A549 (cell line): ENCODE measurements at regions of chr2 and their contacts with region 1.

Region 1: DNA sequence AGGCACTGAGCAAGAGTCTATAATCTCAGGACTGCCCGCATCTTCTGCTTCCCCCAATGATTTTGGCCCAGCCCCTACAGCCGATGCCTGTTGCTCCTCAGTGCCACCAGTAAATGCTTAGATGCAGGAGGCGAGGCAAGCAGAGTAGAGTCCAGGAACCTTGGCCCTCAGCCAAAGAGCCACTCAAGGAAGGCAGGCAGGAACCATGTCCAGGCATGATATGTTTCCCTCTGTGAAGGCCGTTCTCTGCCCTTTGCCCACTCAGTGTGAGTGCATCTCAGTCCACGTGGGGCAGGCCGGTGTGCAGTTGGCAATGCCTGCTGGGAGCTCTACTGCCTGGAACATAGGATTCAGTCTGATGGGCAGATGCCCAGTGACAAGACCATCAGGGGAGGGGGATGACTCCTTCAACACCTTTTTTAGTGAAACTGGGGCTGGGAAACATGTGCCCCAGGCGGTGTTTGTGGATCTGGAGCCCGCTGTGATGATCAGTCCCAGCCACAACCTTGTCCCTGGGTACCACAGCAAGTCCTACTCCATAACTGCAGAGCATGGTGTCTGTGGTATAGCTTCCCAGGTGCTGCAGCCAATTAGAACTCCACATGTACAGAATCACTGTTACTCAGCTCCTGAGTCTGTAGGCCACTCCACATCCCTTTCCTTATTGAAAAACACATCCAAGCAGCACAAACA is 9.7 kb upstream of the DNAJB2 start:
- DNase-seq: no peak
- ATAC-seq: no peak
- H3K4me3 ChIP-seq: no peak overlapping the region
- H3K27ac ChIP-seq: peak overlapping the region; percentile 29 to 96; a peak in 5 of 6 replicates
- H3K4me1 ChIP-seq: peaks cover 46% of the 10 kb centered on the region
- CTCF ChIP-seq: no peak
- EP300 ChIP-seq: no peak
- POLR2A ChIP-seq: no peak
- RAD21 ChIP-seq: no peak

Region 2: DNA sequence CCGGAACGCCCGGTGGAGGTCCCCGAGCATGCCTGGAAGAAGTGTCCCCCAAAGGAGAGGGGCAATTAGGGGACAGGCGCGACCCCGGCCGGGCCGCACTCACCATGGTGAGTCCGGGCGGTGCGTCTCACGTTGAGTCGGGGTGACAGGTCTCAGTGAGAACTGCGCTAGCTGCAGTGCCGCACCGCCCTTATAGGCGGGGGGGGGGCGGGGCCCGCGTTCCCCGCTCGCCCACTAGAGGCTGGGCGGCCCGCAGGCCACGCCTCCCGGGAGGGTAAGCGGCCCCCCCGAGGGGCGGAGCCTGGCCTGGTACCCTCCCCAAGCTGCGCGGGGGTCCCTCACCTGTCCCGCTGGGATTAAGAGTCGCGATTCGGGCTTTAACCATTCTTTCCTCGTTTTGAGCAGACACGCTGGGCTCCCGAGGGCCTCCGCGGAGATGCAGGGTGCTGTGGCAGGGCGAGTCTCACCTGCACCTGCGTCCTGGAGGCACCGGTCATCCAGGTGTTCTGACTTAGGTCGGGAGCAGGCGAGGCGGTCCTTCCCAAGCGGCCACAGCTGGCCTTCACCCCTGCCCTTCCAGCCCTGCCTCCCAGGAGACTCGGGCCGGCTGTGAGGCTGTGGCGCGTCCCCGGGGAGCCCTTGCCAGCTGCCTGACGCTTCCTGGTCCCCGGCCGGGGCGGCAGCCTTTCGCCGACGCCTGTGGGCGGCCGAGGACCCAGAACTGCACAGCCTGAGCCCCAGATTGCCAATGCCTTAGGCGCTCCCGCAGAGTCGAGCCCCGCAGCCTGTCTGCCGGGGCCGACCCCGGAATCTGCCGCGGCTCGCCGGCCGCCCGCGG is 15.5 kb before region 1 on chr2 and contains the start of gene TUBA4A:
- CTCF ChIA-PET with region 1: interaction called, 214 read pairs
- POLR2A ChIA-PET with region 1: interaction called, 65 read pairs
- DNase-seq: peak; percentile 81 to 83
- ATAC-seq: peak; percentile 62 to 82
- H3K4me3 ChIP-seq: peak within 1 kb of the TSS; percentile 71
- H3K27ac ChIP-seq: peak within 1 kb of the TSS; percentile 90
- H3K4me1 ChIP-seq: peaks cover 37% of the 10 kb centered on the region
- CTCF ChIP-seq: no peak
- EP300 ChIP-seq: no peak
- POLR2A ChIP-seq: peak; percentile 99
- RAD21 ChIP-seq: no peak
- polyA plus RNA-seq, gene TUBA4A: 222 and 251 TPM in 2 replicates

Region 3: GRCh38 chr2:219314804-219315468 is 45.4 kb after region 1 on chr2:
- CTCF ChIA-PET with region 1: no interaction called
- POLR2A ChIA-PET with region 1: no interaction called
- DNase-seq: no peak
- ATAC-seq: no peak
- H3K4me3 ChIP-seq: no peak overlapping the region
- H3K27ac ChIP-seq: no peak overlapping the region
- H3K4me1 ChIP-seq: no peaks in the 10 kb centered on the region
- CTCF ChIP-seq: no peak
- EP300 ChIP-seq: no peak
- POLR2A ChIP-seq: no peak
- RAD21 ChIP-seq: no peak

Region 4: GRCh38 chr2:219446081-219446521 is 176.6 kb after region 1 on chr2:
- CTCF ChIA-PET with region 1: no interaction called
- POLR2A ChIA-PET with region 1: no interaction called
- DNase-seq: peak in 1 of 2 experiments; percentile 46
- ATAC-seq: peak; percentile 37 to 64
- H3K4me3 ChIP-seq: no peak overlapping the region
- H3K27ac ChIP-seq: peak overlapping the region in 1 of 2 experiments; percentile 51; a peak in 2 of 6 replicates
- H3K4me1 ChIP-seq: peaks cover 14% of the 10 kb centered on the region
- CTCF ChIP-seq: no peak
- EP300 ChIP-seq: no peak
- POLR2A ChIP-seq: no peak
- RAD21 ChIP-seq: no peak